Aorta (tissue), 5 donors: ENCODE measurements at regions of chr4 and their contacts with region 1.

Region 1: DNA sequence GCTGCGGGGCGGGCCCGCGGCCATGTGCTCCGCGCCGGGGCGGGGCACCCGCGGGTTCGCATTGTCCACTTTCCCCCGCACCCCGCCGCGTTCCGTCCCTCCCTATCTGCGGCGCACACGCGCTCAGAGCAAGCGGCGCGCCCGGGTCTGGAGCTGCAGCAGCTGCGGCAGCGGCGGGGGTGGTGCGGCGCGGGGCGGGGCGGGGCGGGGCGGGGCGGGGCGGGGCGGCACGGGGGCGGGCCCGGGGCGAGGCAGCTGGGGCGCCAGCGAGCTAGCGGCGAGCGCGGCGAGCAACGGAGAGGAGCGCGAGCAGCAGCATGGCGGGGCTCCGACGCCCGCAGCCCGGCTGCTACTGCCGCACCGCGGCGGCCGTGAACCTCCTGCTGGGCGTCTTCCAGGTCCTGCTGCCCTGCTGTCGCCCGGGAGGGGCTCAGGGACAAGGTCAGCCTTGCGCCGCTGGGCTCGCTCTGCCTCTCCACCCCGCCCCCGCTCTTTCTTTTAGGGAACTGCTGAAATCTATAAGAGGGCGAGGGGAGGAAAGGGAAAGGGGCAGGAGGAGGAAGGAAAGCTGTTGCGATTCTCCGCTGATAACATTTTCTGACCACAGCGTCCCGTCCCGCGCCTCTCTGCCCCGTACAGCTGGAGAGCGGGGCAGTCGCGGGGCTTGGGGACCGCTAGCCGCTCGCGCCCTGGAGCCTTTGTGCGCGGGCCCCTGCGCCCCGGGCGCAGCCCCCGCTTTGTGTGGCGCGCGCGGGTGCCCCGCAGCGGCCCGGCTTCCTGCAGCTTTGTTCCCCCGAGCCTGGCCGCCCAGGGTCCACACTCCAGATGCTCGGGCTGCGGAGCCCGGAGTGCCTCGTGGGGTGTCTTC is at the start of gene TMEM131L:
- DNase-seq: peak; percentile 74 to 89
- ATAC-seq: peak; percentile 91
- H3K4me3 ChIP-seq: peak within 1 kb of the TSS; percentile 78 to 86
- H3K27ac ChIP-seq: peak within 1 kb of the TSS in 1 of 2 donors; percentile 55
- H3K4me1 ChIP-seq: no peaks in the 10 kb centered on the region
- H3K27me3 ChIP-seq: no peaks in the 10 kb centered on the region
- total RNA-seq, gene TMEM131L: 20.1 to 22.5 TPM

Region 2: DNA sequence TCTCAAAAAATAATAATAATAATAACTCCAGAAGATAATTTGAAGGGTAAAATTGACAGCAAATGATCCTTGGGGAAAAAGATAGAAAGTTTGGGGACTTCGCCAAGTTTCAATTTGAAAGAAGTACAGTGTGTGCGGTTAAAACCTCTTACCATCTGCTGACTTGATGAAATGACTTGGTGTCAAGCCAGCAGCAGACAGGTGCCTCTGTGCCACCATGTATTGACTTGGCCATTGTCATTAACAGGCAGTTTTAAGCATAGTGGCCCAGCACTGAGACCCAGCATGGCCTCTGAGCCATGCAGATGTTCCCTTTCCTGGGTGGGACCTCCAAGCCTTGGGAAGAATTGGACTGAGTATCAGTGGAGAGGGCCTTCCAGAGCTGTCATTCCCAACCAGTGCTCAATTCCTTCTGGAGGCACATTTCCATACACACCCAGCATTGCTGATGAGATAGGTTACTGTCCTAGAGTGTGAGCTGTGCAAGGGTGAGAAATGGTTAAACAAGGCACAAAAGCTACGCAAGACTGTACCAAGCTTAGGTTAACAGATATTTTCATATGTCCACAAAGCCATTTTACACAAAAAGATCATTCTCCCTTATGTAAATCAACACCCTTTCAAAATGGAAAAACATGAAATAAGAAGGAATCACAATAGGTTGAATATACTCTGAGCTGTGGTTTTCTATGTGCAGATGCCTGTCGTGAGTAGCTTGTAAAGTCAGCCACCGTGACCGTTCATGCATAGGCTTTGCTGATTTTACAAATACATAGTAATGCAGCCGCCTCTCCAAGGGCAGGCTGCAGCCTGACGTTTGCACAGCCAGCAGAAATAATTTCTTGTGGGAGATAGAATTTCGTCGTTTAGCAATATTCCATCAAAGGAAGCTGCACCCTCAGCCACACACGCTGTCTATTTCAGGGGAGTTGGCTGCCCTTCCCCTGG is 871.1 kb before region 1 on chr4:
- intact Hi-C with region 1: no loop called
- DNase-seq: no peak
- ATAC-seq: no peak
- H3K4me3 ChIP-seq: no peak overlapping the region
- H3K27ac ChIP-seq: no peak overlapping the region
- H3K4me1 ChIP-seq: no peaks in the 10 kb centered on the region
- H3K27me3 ChIP-seq: no peaks in the 10 kb centered on the region

Region 3: DNA sequence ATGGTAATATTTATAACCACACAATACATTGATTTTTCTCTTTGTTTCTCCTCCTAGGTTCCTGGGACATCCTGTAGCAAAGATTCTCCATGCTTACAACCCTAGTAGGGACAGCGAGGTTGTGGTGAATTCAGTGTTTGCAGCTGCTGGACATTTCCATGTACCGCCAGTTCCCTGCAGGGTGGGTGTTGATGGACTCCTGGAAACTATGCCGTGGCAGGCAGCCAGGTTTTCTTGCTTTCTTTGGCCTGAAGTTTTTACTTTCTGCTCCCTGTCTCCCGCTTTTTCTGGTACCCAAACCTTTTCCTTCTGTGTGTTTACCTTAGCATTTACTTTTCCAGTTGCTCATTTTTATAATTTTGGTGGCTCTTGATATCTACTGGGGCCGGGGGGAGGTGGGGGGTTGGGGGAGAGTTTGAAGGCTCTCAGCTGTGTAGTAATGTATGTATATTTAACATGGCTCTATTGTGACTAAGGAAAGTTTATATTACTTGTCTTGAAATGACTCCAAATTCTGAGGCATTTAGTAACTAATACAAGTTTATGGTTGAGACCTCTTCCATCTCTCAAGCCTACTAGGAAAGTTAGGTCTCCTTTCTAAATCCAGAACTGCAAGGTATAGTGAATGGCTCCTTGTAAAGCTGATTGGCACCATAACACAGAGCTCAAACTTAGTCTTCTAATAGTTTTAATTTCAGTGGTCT is 89.6 kb after region 1 on chr4:
- intact Hi-C with region 1: loop called (anchors 5 kb)
- DNase-seq: peak; percentile 90 to 92
- ATAC-seq: peak; percentile 75
- H3K4me3 ChIP-seq: no peak overlapping the region
- H3K27ac ChIP-seq: peak overlapping the region in 1 of 2 donors; percentile 90
- H3K4me1 ChIP-seq: no peaks in the 10 kb centered on the region
- H3K27me3 ChIP-seq: no peaks in the 10 kb centered on the region